ENCODE measurements at regions of chr1 and their contacts with region 1.

Region 1: GRCh38 chr1:160837558-160838205 is 25.0 kb downstream of the CD244 start:
- DNase-seq: peak; percentile 74 to 93 (median 89)
- H3K4me3 ChIP-seq: peak overlapping the region; percentile 38
- H3K4me3 Mint-ChIP-seq: peak overlapping the region; percentile 63 to 90 (median 83)
- H3K27ac ChIP-seq: peak overlapping the region; percentile 41
- H3K27ac Mint-ChIP-seq: peak overlapping the region; percentile 88 to 98 (median 96)
- H3K4me1 ChIP-seq: peaks cover 71% of the 10 kb centered on the region
- H3K4me1 Mint-ChIP-seq: peaks cover 77 to 91% (median 90%) of the 10 kb centered on the region in 3 donors
- H3K27me3 ChIP-seq: no peaks in the 10 kb centered on the region
- H3K27me3 Mint-ChIP-seq: no peaks in the 10 kb centered on the region

Region 2: GRCh38 chr1:160291248-160292220 is 546.1 kb before region 1 on chr1:
- CTCF ChIA-PET with region 1: no interaction called
- POLR2A ChIA-PET with region 1: no interaction called
- DNase-seq: peak; percentile 41 to 79 (median 66)
- H3K4me3 ChIP-seq: no peak overlapping the region
- H3K4me3 Mint-ChIP-seq: peak overlapping the region in 1 of 7 donors; percentile 32
- H3K27ac ChIP-seq: no peak overlapping the region
- H3K27ac Mint-ChIP-seq: peak overlapping the region; percentile 36 to 86 (median 64)
- H3K4me1 ChIP-seq: peaks cover 5% of the 10 kb centered on the region
- H3K4me1 Mint-ChIP-seq: peaks cover 0 to 6% (median 3%) of the 10 kb centered on the region in 3 donors
- H3K27me3 ChIP-seq: no peaks in the 10 kb centered on the region
- H3K27me3 Mint-ChIP-seq: no peaks in the 10 kb centered on the region

Region 3: DNA sequence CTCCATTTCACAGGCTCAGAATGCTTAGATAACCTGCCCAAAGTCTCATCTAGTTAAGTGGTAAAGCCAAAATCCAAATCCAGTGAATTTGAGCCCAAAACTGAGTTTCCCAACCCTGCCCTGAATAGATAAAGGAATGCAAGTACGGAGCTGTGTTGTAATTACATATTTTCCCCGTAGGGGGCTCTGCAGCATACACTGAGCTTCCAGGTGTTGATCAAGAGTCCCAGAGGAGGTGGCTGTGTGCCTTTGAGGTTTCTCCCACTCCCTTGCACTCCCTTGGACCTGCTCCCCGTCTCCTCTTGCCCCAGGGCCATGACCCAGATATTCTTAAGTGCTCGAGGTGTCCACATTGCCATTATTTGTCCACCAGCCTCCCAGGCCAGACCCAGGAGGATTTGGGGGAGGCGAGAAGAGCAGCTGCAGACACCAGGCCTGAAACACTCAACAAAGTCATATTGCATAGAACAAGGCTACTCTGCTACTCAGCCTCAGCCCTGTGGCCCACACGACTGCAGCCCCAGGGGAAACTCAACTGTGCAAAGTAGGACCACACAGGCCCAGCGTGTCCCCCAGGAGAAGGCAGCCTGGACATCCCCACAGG is 60.1 kb before region 1 on chr1:
- CTCF ChIA-PET with region 1: interaction called, 34 read pairs
- POLR2A ChIA-PET with region 1: interaction called, 6 read pairs
- DNase-seq: peak in 4 of 5 donors; percentile 31 to 64 (median 62)
- H3K4me3 ChIP-seq: no peak overlapping the region
- H3K4me3 Mint-ChIP-seq: peak overlapping the region in 1 of 7 donors; percentile 21
- H3K27ac ChIP-seq: no peak overlapping the region
- H3K27ac Mint-ChIP-seq: peak overlapping the region in 3 of 8 donors; percentile 45 to 90 (median 70)
- H3K4me1 ChIP-seq: peaks cover 7% of the 10 kb centered on the region
- H3K4me1 Mint-ChIP-seq: peaks cover 16 to 27% (median 26%) of the 10 kb centered on the region in 3 donors
- H3K27me3 ChIP-seq: no peaks in the 10 kb centered on the region
- H3K27me3 Mint-ChIP-seq: no peaks in the 10 kb centered on the region

Region 4: DNA sequence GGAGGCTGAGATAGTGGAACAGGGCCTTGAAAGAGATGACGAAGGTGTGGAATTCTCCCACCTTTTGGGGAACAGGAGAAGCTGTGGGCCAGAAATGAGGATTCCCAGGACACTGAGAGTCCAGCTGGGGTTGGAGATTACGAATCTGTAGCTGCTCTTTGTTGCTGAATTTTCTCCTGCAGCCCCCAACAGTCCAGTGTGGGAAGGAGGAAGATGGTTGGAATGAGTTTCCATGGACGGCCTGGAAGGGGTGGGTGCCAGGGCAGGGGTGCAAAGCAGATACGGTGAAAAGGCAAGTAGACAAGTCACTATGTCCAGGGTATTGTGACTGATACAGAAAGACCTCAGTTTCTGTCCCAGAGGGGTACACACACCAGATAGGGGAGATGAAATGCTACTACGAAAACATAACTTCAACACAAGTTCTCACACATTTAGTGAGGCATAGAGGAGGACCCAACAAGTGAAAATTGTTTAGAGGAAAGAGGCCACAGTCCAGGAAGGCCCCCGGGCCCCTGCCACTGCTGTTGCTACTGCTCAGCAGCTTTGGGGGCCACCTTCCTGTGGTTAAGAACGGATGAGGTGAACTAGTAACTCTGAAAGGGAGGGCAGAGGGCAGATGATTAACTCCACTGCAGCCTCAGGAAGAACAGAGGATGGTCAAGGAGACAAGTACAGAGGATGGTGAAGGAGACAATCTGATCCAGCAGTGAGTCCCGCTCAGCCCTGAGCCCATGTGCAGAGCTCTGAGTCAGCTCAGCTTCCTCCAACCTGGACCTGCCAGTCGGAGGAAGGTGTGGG is 17.7 kb after region 1 on chr1:
- CTCF ChIA-PET with region 1: interaction called, 137 read pairs
- POLR2A ChIA-PET with region 1: interaction called, 7 read pairs
- DNase-seq: peak in 2 of 5 donors; percentile 33 to 67
- H3K4me3 ChIP-seq: peak overlapping the region; percentile 8
- H3K4me3 Mint-ChIP-seq: no peak overlapping the region
- H3K27ac ChIP-seq: no peak overlapping the region
- H3K27ac Mint-ChIP-seq: no peak overlapping the region
- H3K4me1 ChIP-seq: peaks cover 34% of the 10 kb centered on the region
- H3K4me1 Mint-ChIP-seq: peaks cover 29 to 35% (median 32%) of the 10 kb centered on the region in 3 donors
- H3K27me3 ChIP-seq: no peaks in the 10 kb centered on the region
- H3K27me3 Mint-ChIP-seq: no peaks in the 10 kb centered on the region

Region 5: GRCh38 chr1:160877221-160877620 is 39.5 kb after region 1 on chr1:
- CTCF ChIA-PET with region 1: interaction called, 37 read pairs
- POLR2A ChIA-PET with region 1: interaction called, 3 read pairs
- DNase-seq: peak in 2 of 5 donors; percentile 42 to 54
- H3K4me3 ChIP-seq: no peak overlapping the region
- H3K4me3 Mint-ChIP-seq: no peak overlapping the region
- H3K27ac ChIP-seq: no peak overlapping the region
- H3K27ac Mint-ChIP-seq: peak overlapping the region in 5 of 8 donors; percentile 2 to 80 (median 27)
- H3K4me1 ChIP-seq: peaks cover 12% of the 10 kb centered on the region
- H3K4me1 Mint-ChIP-seq: peaks cover 23 to 46% (median 23%) of the 10 kb centered on the region in 3 donors
- H3K27me3 ChIP-seq: no peaks in the 10 kb centered on the region
- H3K27me3 Mint-ChIP-seq: no peaks in the 10 kb centered on the region

Region 6: GRCh38 chr1:161185282-161185682 is 347.6 kb after region 1 on chr1:
- CTCF ChIA-PET with region 1: no interaction called
- POLR2A ChIA-PET with region 1: interaction called, 11 read pairs
- DNase-seq: peak; percentile 64 to 90 (median 86)
- H3K4me3 ChIP-seq: peak overlapping the region; percentile 19
- H3K4me3 Mint-ChIP-seq: peak overlapping the region; percentile 82 to 94 (median 88)
- H3K27ac ChIP-seq: peak overlapping the region; percentile 28
- H3K27ac Mint-ChIP-seq: peak overlapping the region; percentile 58 to 98 (median 90)
- H3K4me1 ChIP-seq: peaks cover 85% of the 10 kb centered on the region
- H3K4me1 Mint-ChIP-seq: peaks cover 75 to 87% (median 86%) of the 10 kb centered on the region in 3 donors
- H3K27me3 ChIP-seq: no peaks in the 10 kb centered on the region
- H3K27me3 Mint-ChIP-seq: peaks cover 0 to 1% of the 10 kb centered on the region in 2 donors

Region 7: GRCh38 chr1:161351482-161351881 is 513.8 kb after region 1 on chr1:
- CTCF ChIA-PET with region 1: no interaction called
- POLR2A ChIA-PET with region 1: no interaction called
- DNase-seq: no peak
- H3K4me3 ChIP-seq: no peak overlapping the region
- H3K4me3 Mint-ChIP-seq: no peak overlapping the region
- H3K27ac ChIP-seq: no peak overlapping the region
- H3K27ac Mint-ChIP-seq: no peak overlapping the region
- H3K4me1 ChIP-seq: no peaks in the 10 kb centered on the region
- H3K4me1 Mint-ChIP-seq: peaks cover 7 to 25% (median 7%) of the 10 kb centered on the region in 3 donors
- H3K27me3 ChIP-seq: no peaks in the 10 kb centered on the region
- H3K27me3 Mint-ChIP-seq: no peaks in the 10 kb centered on the region